Activated CD8-positive, alpha-beta T cell treated with anti-CD3 and anti-CD28 coated beads, Interleukin-2, amount 10 ng/mL, durations not matched to agents 7 days and 5 days (primary cell): ENCODE measurements at regions of chr15 and their contacts with region 1.

Region 1: GRCh38 chr15:86624261-86625036 is 544.8 kb downstream of the AGBL1 start:
- DNase-seq: peak; percentile 76
- ATAC-seq: peak; percentile 98
- H3K4me3 Mint-ChIP-seq: no peak overlapping the region
- H3K27ac Mint-ChIP-seq: peak overlapping the region; percentile 39
- H3K4me1 Mint-ChIP-seq: peaks cover 27% of the 10 kb centered on the region
- H3K27me3 Mint-ChIP-seq: peaks cover 4% of the 10 kb centered on the region

Region 2: DNA sequence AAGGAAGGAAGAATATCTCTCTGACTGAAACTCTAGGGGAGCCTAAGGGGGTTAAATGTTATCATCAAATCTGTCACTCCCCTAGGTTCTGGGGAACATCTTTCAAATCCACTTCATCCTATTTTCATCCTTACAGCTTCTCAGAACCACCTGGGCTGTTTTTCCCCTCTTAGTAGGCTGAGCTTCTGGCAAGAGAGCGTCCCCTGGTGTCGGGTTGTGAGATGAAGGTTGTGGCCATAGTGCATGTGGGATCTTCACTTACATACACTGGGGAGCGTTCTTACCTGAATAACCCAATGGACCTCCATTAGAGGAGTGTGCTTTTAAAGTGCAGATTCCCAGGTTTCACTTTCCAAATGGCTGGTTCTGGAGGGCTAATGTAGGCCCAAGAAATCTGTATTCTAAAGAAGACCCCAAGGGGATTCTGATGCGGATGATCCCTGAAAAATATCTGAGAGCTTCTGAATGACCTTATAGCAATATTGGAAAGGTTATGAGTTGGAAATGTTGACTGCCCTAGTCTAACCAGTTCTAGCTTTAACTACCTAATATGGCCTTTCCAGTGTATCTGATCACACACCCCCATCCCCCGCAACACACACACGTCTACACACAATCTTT is 118.9 kb after region 1 on chr15:
- CTCF ChIA-PET with region 1: interaction called, 37 read pairs
- POLR2A ChIA-PET with region 1: no interaction called
- DNase-seq: peak; percentile 57
- ATAC-seq: peak; percentile 57
- H3K4me3 Mint-ChIP-seq: no peak overlapping the region
- H3K27ac Mint-ChIP-seq: no peak overlapping the region
- H3K4me1 Mint-ChIP-seq: no peaks in the 10 kb centered on the region
- H3K27me3 Mint-ChIP-seq: no peaks in the 10 kb centered on the region